ENCODE measurements at regions of chr12 and their contacts with region 1.

Region 1: GRCh38 chr12:24534622-24535021 is 414.3 kb downstream of the BCAT1 start:
- DNase-seq: no peak
- H3K4me3 ChIP-seq: no peak overlapping the region
- H3K27ac ChIP-seq: no peak overlapping the region
- H3K4me1 ChIP-seq: peaks cover 0 to 9% (median 0%) of the 10 kb centered on the region in 4 experiments; a peak in 2 of 7 replicates
- H3K27me3 ChIP-seq: no peaks in the 10 kb centered on the region
- CTCF ChIP-seq: peak in 2 of 3 experiments; percentile 6 to 20; a peak in 2 of 4 replicates
- EP300 ChIP-seq: no peak
- POLR2A ChIP-seq: no peak
- RAD21 ChIP-seq: peak; percentile 27 to 36; a peak in 2 of 4 replicates

Region 2: DNA sequence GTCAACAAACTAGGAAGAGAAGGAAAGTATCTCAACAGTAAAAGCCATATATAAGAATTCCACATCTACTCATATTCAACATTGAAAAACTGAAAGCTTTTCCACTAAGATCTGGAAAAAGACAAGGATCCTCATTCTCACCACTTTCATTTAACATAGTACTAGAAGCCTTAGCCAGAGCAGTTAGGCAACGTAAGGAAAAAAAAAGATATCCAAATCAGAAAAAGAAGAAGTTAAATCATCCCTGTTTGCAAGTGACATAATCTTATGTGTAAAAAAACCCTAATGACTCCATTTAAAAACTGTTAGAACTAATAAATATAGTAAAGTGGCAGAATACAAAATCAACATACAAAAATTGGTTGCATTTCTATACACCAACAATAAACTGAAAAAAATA is 11.9 kb before region 1 on chr12:
- CTCF ChIA-PET with region 1: interaction called, 15 read pairs
- POLR2A ChIA-PET with region 1: interaction called, 4 read pairs
- DNase-seq: no peak
- H3K4me3 ChIP-seq: no peak overlapping the region
- H3K27ac ChIP-seq: no peak overlapping the region
- H3K4me1 ChIP-seq: no peaks in the 10 kb centered on the region
- H3K27me3 ChIP-seq: no peaks in the 10 kb centered on the region
- CTCF ChIP-seq: no peak
- EP300 ChIP-seq: no peak
- POLR2A ChIP-seq: no peak
- RAD21 ChIP-seq: no peak

Region 3: GRCh38 chr12:24679126-24679525 is 144.5 kb after region 1 on chr12:
- CTCF ChIA-PET with region 1: no interaction called
- POLR2A ChIA-PET with region 1: no interaction called
- DNase-seq: no peak
- H3K4me3 ChIP-seq: no peak overlapping the region
- H3K27ac ChIP-seq: no peak overlapping the region
- H3K4me1 ChIP-seq: peaks cover 0 to 8% (median 4%) of the 10 kb centered on the region in 4 experiments; a peak in 4 of 7 replicates
- H3K27me3 ChIP-seq: no peaks in the 10 kb centered on the region
- CTCF ChIP-seq: no peak
- EP300 ChIP-seq: no peak
- POLR2A ChIP-seq: no peak
- RAD21 ChIP-seq: no peak